BJ (cell line): ENCODE measurements at regions of chr1 and their contacts with region 1.

Region 1: DNA sequence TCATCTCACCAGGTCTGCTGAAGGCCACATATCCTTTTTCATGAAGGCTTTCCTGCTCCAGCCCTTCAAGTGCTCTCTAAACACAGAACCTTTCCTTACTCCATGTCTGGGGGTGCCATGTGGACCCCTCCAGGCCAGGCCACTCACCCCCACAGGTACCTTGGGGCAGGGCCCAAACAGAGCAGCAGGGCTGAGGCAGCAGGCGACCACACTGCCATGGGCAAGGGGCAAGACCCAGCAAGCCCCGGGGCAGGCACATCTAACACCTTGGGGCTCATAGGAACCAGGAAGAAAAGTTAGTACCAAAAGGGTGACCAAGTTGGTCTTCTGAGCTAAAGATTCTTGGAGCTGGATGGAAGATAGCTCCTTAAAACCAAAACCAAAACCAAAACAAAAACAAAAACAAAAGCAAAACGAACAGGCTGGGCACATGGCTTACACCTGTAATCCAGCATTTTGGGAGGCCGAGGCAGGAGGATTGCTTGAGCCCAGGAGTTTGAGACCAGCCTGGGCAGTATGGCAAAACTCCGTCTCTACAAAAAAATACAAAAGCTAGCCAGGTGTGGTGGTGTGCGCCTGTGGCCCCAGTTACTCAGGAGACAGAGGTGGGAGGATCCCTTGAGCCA is 63.7 kb downstream of the MRPL37 start:
- DNase-seq: no peak
- H3K4me3 ChIP-seq: no peak overlapping the region
- H3K27me3 ChIP-seq: no peaks in the 10 kb centered on the region
- CTCF ChIP-seq: no peak

Region 2: GRCh38 chr1:54199765-54200518 is 63.8 kb before region 1 on chr1 and contains the starts of genes CYB5RL and MRPL37:
- CTCF ChIA-PET with region 1: no interaction called
- POLR2A ChIA-PET with region 1: interaction called, 11 read pairs
- DNase-seq: peak; percentile 77
- H3K4me3 ChIP-seq: peak within 1 kb of the TSS; percentile 80
- H3K27me3 ChIP-seq: no peaks in the 10 kb centered on the region
- CTCF ChIP-seq: no peak
- polyA plus RNA-seq, gene CYB5RL: 3.2 and 4.0 TPM in 2 replicates
- polyA plus RNA-seq, gene MRPL37: 21.0 and 23.1 TPM in 2 replicates

Region 3: DNA sequence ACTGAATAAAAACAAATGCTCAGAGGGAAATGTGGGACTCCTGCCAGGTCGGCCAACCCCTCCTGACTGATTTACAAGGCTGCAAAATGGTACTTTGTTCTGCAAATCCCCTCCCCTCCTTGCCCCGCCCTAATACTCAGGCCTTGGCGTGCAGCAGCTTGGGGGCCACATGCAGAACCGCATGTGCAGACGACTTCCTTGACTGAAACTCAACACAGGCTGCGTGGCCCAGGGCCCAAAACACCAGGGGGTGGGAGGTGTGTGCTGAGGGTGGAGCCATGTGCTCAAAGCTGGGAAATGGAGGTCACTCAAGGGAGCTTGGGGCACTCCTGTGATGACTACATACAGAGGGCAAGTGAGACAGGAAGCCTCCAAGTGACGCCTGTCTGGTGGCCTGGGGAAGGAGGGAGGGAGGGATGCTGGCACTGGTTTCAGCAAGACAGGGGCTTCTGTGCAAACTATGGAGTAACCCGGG is 23.5 kb after region 1 on chr1:
- CTCF ChIA-PET with region 1: no interaction called
- POLR2A ChIA-PET with region 1: no interaction called
- DNase-seq: peak; percentile 59
- H3K4me3 ChIP-seq: no peak overlapping the region
- H3K27me3 ChIP-seq: no peaks in the 10 kb centered on the region
- CTCF ChIP-seq: no peak

Region 4: DNA sequence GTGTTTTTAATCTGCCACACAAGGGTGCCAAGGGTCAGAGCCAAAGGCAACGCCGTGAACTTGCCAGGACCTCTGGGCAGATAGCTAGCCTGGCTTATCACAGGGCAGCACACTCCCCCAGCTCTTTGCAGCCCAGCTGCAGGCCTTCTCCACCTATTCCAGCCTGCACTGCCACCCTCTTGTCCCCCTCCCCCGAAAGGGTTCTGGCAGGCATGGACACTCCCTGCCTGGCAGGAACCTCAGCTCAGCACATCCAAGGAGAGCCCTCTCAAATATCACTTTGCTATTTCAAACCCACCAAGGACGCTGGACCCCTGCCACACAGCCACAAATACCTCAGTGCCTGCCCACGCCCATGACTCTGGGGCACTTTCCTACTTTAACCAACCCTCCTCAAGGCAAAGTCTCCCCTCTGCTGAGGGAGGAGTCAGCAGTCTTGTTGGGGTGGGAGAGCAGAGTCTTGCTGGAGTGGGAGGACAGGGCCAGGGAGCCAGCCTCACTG is 133.4 kb after region 1 on chr1:
- CTCF ChIA-PET with region 1: no interaction called
- POLR2A ChIA-PET with region 1: no interaction called
- DNase-seq: no peak
- H3K4me3 ChIP-seq: no peak overlapping the region
- H3K27me3 ChIP-seq: no peaks in the 10 kb centered on the region
- CTCF ChIP-seq: no peak